H1 (cell line): ENCODE measurements at regions of chr16 and their contacts with region 1.

Region 1: DNA sequence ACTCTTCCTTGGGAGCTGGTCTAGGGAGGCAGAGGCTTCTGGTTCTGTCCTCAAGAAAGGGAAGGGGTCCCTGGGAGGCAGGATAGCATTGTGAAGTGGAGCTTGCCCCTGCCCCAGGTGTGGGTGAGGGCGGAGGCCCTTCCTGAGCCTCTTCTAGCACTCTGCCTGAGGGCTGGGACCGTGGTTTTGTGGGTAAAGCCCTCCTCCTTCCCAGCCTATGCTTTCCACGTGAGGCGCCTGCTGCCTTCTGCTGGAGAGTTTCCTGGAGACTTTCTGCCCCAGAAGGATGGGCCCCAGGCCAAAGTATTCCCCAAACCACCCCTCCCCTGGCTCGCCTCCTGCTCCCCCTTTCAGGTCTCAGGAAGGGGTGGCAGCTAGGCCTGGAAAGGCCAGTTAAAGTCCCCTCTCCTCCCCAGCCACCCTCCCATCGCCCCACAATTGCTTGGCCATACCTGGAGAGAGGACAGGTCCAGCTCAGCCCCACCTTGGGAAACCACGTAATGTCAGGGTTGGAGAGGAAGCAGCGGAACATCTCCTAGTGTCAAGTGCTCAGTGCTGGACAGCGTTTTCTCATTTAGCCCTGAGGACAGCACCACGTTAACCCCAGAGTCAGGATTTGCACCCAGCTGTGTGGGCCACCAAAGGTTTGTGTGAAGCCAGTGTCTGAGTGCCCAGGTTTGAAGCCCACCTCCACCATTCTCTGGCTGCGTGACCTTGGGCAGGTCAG is 5.6 kb downstream of the SBK1 start:
- DNase-seq: no peak
- H3K4me3 ChIP-seq: 0 out of 8 replicates have a peak overlapping the region, but pooled peaks of 1 of the 4 experiments have one; percentile 3
- H3K27ac ChIP-seq: no peak overlapping the region
- H3K4me1 ChIP-seq: peaks cover 6 to 37% (median 22%) of the 10 kb centered on the region in 4 experiments
- H3K27me3 ChIP-seq: no peaks in the 10 kb centered on the region
- CTCF ChIP-seq: no peak
- EP300 ChIP-seq: no peak
- POLR2A ChIP-seq: no peak
- RAD21 ChIP-seq: no peak

Region 2: DNA sequence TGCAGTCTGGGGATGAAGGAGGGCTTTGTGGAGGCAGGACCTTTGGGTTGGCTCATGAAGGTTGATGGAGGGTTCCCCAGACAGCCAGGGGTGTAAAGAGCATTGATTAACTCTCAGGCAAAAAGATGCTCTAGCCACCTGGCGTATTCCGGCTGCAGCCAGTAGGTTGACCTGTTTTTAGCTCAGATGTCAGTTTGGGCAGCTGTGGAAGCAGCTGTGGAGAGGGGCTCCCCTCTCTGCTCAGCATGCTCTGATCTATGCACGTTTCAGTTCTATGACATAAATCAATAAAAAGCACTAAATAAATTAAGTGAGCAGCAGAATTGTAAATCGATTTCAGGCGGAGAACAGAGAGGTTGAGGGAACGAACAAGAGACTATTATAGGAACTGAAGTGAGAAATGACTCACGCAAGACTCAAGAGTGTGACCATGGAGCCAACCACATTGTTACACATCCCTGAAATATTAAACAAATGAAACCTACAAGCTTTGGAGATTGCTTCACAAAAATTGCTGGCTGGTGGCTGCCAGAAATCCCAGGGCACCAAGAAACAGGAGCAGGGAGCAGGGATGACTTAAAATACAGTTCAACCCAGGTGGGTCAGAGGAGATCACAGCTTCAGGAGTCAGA is 346.3 kb before region 1 on chr16:
- CTCF ChIA-PET with region 1: no interaction called
- POLR2A ChIA-PET with region 1: no interaction called
- DNase-seq: no peak
- H3K4me3 ChIP-seq: no peak overlapping the region
- H3K27ac ChIP-seq: no peak overlapping the region
- H3K4me1 ChIP-seq: no peaks in the 10 kb centered on the region
- H3K27me3 ChIP-seq: no peaks in the 10 kb centered on the region; a peak in 1 of 7 replicates
- CTCF ChIP-seq: no peak
- EP300 ChIP-seq: no peak
- POLR2A ChIP-seq: no peak
- RAD21 ChIP-seq: no peak

Region 3: GRCh38 chr16:28309811-28310311 is 11.9 kb after region 1 on chr16:
- CTCF ChIA-PET with region 1: interaction called, 22 read pairs
- POLR2A ChIA-PET with region 1: interaction called, 26 read pairs
- DNase-seq: no peak
- H3K4me3 ChIP-seq: no peak overlapping the region
- H3K27ac ChIP-seq: no peak overlapping the region
- H3K4me1 ChIP-seq: no peaks in the 10 kb centered on the region; a peak in 1 of 7 replicates
- H3K27me3 ChIP-seq: no peaks in the 10 kb centered on the region
- CTCF ChIP-seq: no peak
- EP300 ChIP-seq: no peak
- POLR2A ChIP-seq: no peak
- RAD21 ChIP-seq: no peak

Region 4: GRCh38 chr16:28317040-28317880 is 19.3 kb after region 1 on chr16:
- CTCF ChIA-PET with region 1: interaction called, 32 read pairs
- POLR2A ChIA-PET with region 1: interaction called, 6 read pairs
- DNase-seq: peak in 1 of 2 experiments; percentile 92
- H3K4me3 ChIP-seq: no peak overlapping the region
- H3K27ac ChIP-seq: no peak overlapping the region
- H3K4me1 ChIP-seq: no peaks in the 10 kb centered on the region
- H3K27me3 ChIP-seq: no peaks in the 10 kb centered on the region
- CTCF ChIP-seq: peak; percentile 90 to 95 (median 91)
- EP300 ChIP-seq: no peak
- POLR2A ChIP-seq: no peak
- RAD21 ChIP-seq: peak; percentile 72 to 81